GM12878 (cell line): ENCODE measurements at regions of chr7 and their contacts with region 1.

Region 1: GRCh38 chr7:129611246-129612111 is at the start of gene NRF1:
- DNase-seq: peak; percentile 57
- ATAC-seq: peak; percentile 87
- H3K4me3 ChIP-seq: peak within 1 kb of the TSS; percentile 96
- H3K27ac ChIP-seq: peak within 1 kb of the TSS; percentile 91
- H3K4me1 ChIP-seq: peaks cover 23% of the 10 kb centered on the region
- H3K27me3 ChIP-seq: no peaks in the 10 kb centered on the region
- CTCF ChIP-seq: peak in 1 of 3 experiments; percentile 15; a peak in 2 of 6 replicates
- EP300 ChIP-seq: no peak
- POLR2A ChIP-seq: peak; percentile 96
- RAD21 ChIP-seq: no peak
- polyA plus RNA-seq, gene NRF1: 3.5 TPM

Region 2: DNA sequence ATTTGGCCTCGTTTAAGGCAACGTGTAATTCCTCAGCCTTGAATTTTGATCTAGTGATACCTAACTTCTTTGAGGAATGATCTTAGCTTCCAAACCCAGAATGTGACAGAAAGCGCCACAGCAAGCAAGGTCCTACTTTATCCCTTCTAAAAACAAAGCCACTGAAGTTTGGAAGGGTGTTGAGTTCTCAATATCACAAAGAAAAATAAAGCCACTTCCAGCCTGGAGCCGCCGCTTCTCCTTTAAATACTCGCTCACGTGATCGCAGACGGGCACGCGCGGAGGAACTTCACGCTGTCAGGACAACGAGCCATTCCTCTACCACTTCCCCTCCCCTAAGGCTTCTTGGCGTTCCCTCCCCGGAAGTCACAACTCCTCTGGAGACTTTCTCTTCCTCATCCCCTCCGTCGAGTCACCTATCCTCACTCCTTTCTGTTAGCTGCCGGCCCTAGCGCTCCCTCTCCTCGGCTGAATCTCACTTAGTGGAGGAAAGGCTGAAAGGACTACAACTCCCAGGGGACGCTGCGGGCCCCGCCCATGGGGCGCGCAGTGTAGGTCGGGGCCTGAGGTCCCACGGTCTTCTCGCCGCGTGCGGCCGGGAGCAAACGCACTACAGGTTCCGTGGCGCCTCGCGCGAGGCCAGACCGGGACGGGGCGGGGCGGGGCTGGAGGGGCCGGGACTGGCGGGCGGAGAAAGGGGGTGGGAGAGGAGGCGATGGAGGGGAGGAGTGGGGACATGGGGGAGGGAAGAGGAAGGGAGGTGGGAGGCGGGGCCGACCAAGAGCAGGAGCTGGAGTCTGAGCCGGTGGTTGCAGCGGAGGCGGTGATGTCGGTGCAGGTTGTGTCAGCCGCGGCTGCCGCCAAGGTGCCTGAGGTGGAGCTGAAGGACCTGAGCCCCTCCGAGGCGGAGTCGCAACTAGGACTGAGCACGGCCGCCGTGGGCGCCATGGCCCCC is 387.0 kb before region 1 on chr7 and contains the start of gene AHCYL2:
- CTCF ChIA-PET with region 1: no interaction called
- POLR2A ChIA-PET with region 1: no interaction called
- RAD21 ChIA-PET with region 1: no interaction called
- SMC1A ChIA-PET with region 1: no interaction called
- in situ Hi-C with region 1: no loop called
- intact Hi-C with region 1: loop called (anchors 10 kb)
- DNase-seq: peak; percentile 89
- ATAC-seq: peak; percentile 97
- H3K4me3 ChIP-seq: peak within 1 kb of the TSS; percentile 72
- H3K27ac ChIP-seq: peak within 1 kb of the TSS; percentile 71
- H3K4me1 ChIP-seq: peaks cover 8% of the 10 kb centered on the region; the same call in 1 of the 2 replicates
- H3K27me3 ChIP-seq: no peaks in the 10 kb centered on the region
- CTCF ChIP-seq: no peak
- EP300 ChIP-seq: no peak
- POLR2A ChIP-seq: peak; percentile 90
- RAD21 ChIP-seq: no peak
- polyA plus RNA-seq, gene AHCYL2: 1.7 to 2.0 TPM

Region 3: DNA sequence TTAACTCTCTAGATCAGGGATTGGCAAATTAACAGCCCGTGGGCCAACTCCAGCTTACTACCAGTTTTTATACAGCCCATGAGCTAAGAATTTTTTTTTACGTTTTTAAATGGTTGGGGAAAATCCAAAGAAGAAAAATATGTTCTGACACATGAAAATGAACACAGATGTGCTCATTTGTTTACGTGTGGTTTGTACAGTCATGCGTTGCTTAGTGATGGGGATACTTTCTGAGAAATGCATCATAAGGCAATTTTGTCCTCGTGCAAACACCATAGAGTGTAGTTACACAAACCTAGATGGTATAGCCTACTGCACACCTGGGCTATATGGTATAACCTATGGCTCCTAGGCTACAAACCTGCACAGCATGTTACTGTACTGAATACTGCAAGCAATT is 117.4 kb before region 1 on chr7:
- CTCF ChIA-PET with region 1: interaction called, 6 read pairs
- POLR2A ChIA-PET with region 1: no interaction called
- RAD21 ChIA-PET with region 1: no interaction called
- SMC1A ChIA-PET with region 1: no interaction called
- in situ Hi-C with region 1: no loop called
- intact Hi-C with region 1: loop called (anchors 5 kb)
- DNase-seq: peak; percentile 31
- ATAC-seq: peak; percentile 88
- H3K4me3 ChIP-seq: no peak overlapping the region
- H3K27ac ChIP-seq: no peak overlapping the region
- H3K4me1 ChIP-seq: peaks cover 4% of the 10 kb centered on the region; the same call in 1 of the 2 replicates
- H3K27me3 ChIP-seq: no peaks in the 10 kb centered on the region
- CTCF ChIP-seq: no peak
- EP300 ChIP-seq: no peak
- POLR2A ChIP-seq: no peak
- RAD21 ChIP-seq: no peak

Region 4: DNA sequence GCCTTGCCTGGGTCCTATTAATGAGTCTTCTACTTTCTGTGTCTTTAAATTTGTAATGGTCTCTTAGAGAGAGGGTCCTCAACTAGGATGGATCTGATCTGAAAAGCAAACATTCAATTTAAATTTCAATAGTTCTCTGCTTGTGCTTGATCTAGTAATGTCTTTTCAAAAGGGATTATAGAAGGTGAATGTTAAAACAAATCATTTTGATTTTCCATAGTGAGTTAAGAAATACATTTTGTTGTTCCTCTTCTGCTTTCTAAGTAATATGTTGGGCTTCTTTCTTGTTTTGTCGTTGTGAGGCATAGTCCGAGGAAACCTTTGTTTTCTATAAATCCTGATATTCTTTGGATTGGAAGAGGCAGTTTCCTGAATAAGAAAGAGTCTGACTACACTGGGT is 18.9 kb after region 1 on chr7:
- CTCF ChIA-PET with region 1: interaction called, 328 read pairs
- POLR2A ChIA-PET with region 1: interaction called, 16 read pairs
- RAD21 ChIA-PET with region 1: interaction called, 39 read pairs
- SMC1A ChIA-PET with region 1: interaction called, 48 read pairs
- in situ Hi-C with region 1: no loop called
- intact Hi-C with region 1: loop called (anchors 1 kb)
- DNase-seq: no peak
- ATAC-seq: no peak
- H3K4me3 ChIP-seq: no peak overlapping the region
- H3K27ac ChIP-seq: no peak overlapping the region
- H3K4me1 ChIP-seq: peaks cover 6% of the 10 kb centered on the region; the same call in 1 of the 2 replicates
- H3K27me3 ChIP-seq: no peaks in the 10 kb centered on the region
- CTCF ChIP-seq: no peak
- EP300 ChIP-seq: no peak
- POLR2A ChIP-seq: no peak
- RAD21 ChIP-seq: no peak

Region 5: DNA sequence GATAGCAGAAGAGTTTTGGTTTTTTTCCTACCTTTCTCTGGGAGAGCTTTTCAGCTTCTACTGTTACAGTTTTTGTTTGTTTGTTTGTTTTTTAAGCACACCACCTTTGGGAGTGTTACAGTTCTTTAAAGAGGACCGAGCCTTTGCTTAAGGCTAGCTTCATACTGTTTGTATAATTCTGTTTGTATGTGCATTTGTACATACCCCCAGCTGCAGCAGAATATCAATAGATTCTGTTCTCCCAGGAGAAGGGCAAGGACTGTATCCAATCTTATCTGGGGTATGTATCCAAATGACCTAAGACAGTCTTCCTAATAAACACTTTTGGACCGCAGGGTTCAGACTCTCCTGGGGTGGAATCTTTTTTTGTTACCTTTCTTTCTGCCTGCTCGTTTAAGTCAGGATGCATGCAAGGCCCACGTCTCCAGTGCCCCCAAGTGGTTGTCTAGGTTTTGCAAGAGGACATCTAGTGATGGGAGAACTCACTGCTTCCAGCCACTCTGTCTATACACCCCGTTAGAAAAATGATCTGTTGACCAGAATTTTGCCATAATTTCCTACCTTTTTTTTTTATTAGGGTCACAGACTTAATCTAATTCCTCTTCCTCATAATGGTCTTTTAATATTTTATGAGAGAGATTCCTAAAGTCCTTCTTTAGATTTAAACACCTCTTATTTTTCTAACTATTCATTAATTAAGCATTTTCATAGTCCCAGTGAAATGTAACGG is 24.0 kb after region 1 on chr7:
- CTCF ChIA-PET with region 1: interaction called, 328 read pairs
- POLR2A ChIA-PET with region 1: interaction called, 16 read pairs
- RAD21 ChIA-PET with region 1: interaction called, 39 read pairs
- SMC1A ChIA-PET with region 1: interaction called, 48 read pairs
- in situ Hi-C with region 1: no loop called
- intact Hi-C with region 1: loop called (anchors 1 kb)
- DNase-seq: peak; percentile 47
- ATAC-seq: peak; percentile 100
- H3K4me3 ChIP-seq: no peak overlapping the region
- H3K27ac ChIP-seq: no peak overlapping the region
- H3K4me1 ChIP-seq: peaks cover 7% of the 10 kb centered on the region
- H3K27me3 ChIP-seq: no peaks in the 10 kb centered on the region
- CTCF ChIP-seq: peak; percentile 85 to 89 (median 89)
- EP300 ChIP-seq: no peak
- POLR2A ChIP-seq: no peak
- RAD21 ChIP-seq: peak; percentile 85

Region 6: DNA sequence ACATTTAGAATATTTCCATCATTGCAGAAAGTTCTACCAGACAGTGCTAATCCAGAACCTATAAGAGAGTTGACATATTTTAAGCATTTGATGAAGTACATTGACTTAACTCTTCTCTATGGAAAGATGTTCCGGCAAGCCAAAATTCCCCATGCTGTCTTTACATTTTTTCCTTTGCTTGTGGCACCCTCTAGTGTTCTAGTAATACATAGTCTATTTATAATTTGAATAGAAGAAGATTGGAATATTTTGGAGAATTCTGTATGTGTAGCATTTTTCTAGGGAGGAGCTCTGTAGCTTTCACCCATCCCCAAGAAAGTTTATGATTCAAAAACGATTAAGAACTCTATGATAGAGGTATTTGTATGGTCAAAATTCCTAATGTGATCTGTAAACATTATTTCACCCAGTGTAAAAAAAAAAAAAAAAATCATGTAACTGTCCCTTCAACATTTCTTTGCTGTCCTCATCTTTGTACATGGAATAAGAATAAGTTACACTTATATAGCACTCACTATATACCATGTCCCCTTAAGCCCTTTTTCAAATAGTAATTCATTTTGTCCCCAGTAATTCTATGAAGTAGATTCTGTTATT is 33.3 kb after region 1 on chr7:
- CTCF ChIA-PET with region 1: interaction called, 19 read pairs
- POLR2A ChIA-PET with region 1: interaction called, 6 read pairs
- RAD21 ChIA-PET with region 1: interaction called, 25 read pairs
- SMC1A ChIA-PET with region 1: interaction called, 31 read pairs
- in situ Hi-C with region 1: no loop called
- intact Hi-C with region 1: no loop called
- DNase-seq: no peak
- ATAC-seq: no peak
- H3K4me3 ChIP-seq: no peak overlapping the region
- H3K27ac ChIP-seq: no peak overlapping the region
- H3K4me1 ChIP-seq: peaks cover 5% of the 10 kb centered on the region; the same call in 1 of the 2 replicates
- H3K27me3 ChIP-seq: no peaks in the 10 kb centered on the region
- CTCF ChIP-seq: peak; percentile 7 to 42 (median 28); a peak in 3 of 6 replicates
- EP300 ChIP-seq: no peak
- POLR2A ChIP-seq: no peak
- RAD21 ChIP-seq: peak; percentile 49

Region 7: DNA sequence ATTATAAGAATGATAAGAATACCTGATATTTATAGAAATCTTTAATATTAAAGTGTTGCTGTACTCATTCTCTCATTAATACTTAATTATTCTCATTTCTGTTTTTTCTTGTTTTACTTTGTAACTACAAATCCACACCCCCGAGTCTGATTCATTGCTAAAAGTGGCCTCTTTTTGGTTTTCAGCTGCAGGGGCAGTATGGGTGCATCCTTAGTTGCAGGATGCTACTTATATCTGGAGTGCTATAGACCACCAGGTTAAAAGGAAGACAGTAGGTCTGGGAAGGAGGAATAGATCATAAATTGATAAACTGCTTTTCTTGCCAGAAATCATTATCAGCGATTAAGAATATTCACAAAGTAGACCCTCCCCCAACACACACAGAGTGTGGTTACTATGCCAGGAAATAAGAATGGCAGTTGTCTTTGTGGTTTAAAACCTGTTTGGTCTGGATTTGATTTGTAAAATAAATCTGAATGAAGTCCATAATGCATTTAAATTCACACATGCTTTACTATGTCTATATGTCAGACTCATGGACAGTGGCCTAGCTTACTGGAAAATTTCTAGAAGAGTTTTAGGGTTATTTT is 96.5 kb after region 1 on chr7:
- CTCF ChIA-PET with region 1: no interaction called
- POLR2A ChIA-PET with region 1: no interaction called
- RAD21 ChIA-PET with region 1: no interaction called
- SMC1A ChIA-PET with region 1: no interaction called
- in situ Hi-C with region 1: no loop called
- intact Hi-C with region 1: no loop called
- DNase-seq: no peak
- ATAC-seq: no peak
- H3K4me3 ChIP-seq: no peak overlapping the region
- H3K27ac ChIP-seq: no peak overlapping the region
- H3K4me1 ChIP-seq: no peaks in the 10 kb centered on the region
- H3K27me3 ChIP-seq: no peaks in the 10 kb centered on the region
- CTCF ChIP-seq: no peak
- EP300 ChIP-seq: no peak
- POLR2A ChIP-seq: no peak
- RAD21 ChIP-seq: no peak

Region 8: GRCh38 chr7:129825496-129826267 is 214.2 kb after region 1 on chr7:
- CTCF ChIA-PET with region 1: interaction called, 17 read pairs
- POLR2A ChIA-PET with region 1: interaction called, 3 read pairs
- RAD21 ChIA-PET with region 1: interaction called, 8 read pairs
- SMC1A ChIA-PET with region 1: interaction called, 5 read pairs
- in situ Hi-C with region 1: no loop called
- intact Hi-C with region 1: no loop called
- DNase-seq: no peak
- ATAC-seq: peak; percentile 88
- H3K4me3 ChIP-seq: peak overlapping the region; percentile 79
- H3K27ac ChIP-seq: no peak overlapping the region
- H3K4me1 ChIP-seq: peaks cover 4% of the 10 kb centered on the region
- H3K27me3 ChIP-seq: no peaks in the 10 kb centered on the region
- CTCF ChIP-seq: peak; percentile 37 to 72 (median 70); a peak in 4 of 6 replicates
- EP300 ChIP-seq: no peak
- POLR2A ChIP-seq: peak; percentile 61; the same call in 1 of the 2 replicates
- RAD21 ChIP-seq: peak; percentile 77